Aorta (tissue), 5 donors: ENCODE measurements at regions of chr11 and their contacts with region 1.

Region 1: GRCh38 chr11:70467201-70468085 is 69.1 kb downstream of the CTTN start:
- DNase-seq: peak; percentile 67 to 86
- ATAC-seq: peak; percentile 61
- H3K4me3 ChIP-seq: no peak overlapping the region
- H3K27ac ChIP-seq: no peak overlapping the region
- H3K4me1 ChIP-seq: no peaks in the 10 kb centered on the region
- H3K27me3 ChIP-seq: no peaks in the 10 kb centered on the region

Region 2: DNA sequence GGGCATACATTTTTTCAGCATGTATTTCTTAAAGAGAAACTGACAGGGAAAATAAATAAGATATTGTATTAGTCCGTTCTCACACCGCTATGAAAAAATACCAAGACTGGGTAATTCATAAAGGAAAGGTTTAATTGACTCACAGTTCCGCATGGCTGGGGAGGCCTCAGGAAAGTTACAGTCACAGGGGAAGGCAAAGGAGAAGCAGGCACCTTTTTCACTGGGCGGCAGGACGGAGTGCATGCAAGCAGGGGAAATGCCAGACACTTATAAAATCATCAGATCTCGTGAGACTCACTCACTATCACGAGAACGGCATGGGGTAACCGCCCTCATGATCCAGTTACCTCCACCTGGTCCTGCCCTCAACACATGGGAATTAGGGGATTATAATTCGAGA is 152.7 kb before region 1 on chr11:
- intact Hi-C with region 1: no loop called
- DNase-seq: no peak
- ATAC-seq: no peak
- H3K4me3 ChIP-seq: no peak overlapping the region
- H3K27ac ChIP-seq: no peak overlapping the region
- H3K4me1 ChIP-seq: no peaks in the 10 kb centered on the region
- H3K27me3 ChIP-seq: no peaks in the 10 kb centered on the region

Region 3: DNA sequence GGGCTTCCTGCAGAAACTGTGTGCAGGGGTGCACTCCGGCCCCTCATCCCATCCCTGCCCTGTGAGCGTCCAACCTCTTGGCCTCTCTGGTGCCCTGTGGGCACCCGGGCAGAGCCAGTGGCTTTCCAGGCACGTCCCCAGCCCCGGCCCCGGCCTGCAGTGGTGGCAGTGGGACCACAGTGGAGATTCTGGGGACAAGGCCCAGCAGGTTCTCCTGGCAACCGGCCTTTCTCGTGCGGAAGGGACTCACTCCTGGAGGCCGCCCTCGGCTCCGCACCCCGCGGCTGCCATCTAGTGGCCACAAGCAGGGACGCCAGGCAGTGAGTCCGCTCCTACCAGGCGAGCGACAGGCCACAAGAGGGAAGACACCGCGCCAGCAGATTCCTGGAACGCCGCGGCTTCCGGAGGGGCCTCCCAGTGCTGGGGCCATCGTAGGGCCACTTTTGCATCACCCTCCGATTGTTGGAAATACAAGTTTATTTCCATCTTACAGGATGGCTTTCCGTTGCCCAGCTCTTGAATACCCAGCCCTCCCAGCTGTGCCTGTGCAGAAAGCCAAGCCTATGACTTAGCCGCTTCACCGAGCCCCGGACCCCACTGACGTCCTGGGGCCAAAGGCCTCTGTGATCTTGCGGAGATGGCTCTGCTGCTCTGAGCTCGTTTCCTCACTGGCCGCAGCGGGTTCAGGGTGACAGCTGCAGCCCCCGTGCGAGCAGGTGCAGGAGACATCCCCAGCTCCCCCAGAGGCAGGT is 288.1 kb after region 1 on chr11:
- intact Hi-C with region 1: loop called (anchors 1 to 10 kb)
- DNase-seq: peak; percentile 73 to 90
- ATAC-seq: peak; percentile 84
- H3K4me3 ChIP-seq: no peak overlapping the region
- H3K27ac ChIP-seq: no peak overlapping the region
- H3K4me1 ChIP-seq: no peaks in the 10 kb centered on the region
- H3K27me3 ChIP-seq: no peaks in the 10 kb centered on the region

Region 4: GRCh38 chr11:71372693-71373657 is 905.5 kb after region 1 on chr11:
- intact Hi-C with region 1: loop called in 1 of 2 experiments (anchors 10 kb)
- DNase-seq: no peak
- ATAC-seq: no peak
- H3K4me3 ChIP-seq: no peak overlapping the region
- H3K27ac ChIP-seq: no peak overlapping the region
- H3K4me1 ChIP-seq: no peaks in the 10 kb centered on the region
- H3K27me3 ChIP-seq: no peaks in the 10 kb centered on the region